ENCODE measurements at regions of chr4 and their contacts with region 1.

Region 1: DNA sequence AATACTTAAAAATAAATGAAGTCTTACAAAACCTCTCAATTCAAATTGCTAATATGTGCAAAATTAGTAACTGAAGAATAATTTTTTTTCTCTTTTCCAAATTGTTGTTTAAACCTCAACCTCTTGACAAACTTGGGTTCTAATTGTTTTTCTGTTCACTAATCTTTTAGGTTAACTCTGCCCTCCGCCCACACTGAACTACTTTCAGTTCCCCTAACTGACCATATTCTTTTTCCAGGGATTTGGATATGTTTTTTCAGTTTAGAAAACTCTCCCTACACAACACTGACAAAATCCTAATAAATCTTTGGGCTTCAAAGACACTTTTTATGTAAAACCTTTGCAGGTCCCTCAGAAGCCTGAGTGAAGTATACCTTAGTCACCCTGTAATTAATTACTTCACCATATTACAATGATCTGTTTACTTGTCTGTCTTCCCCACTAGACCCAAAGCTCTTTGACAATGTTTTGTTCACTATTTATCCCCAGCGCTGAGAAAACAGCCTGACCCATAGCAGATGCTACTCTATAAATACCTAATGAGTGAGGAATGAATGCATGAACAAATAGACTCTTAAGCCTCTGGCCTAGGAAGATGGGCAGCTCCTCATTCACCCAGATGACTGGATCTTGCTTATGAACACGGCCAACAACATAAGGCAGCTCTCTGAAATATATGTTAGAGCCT is 134.9 kb downstream of the MAML3 start:
- DNase-seq: peak in 2 of 3 donors; percentile 30 to 51
- H3K4me3 ChIP-seq: no peak overlapping the region
- H3K27ac ChIP-seq: peak overlapping the region in 1 of 2 experiments; percentile 44
- H3K4me1 ChIP-seq: peaks cover 0 to 29% (median 22%) of the 10 kb centered on the region in 4 experiments
- H3K27me3 ChIP-seq: no peaks in the 10 kb centered on the region

Region 2: DNA sequence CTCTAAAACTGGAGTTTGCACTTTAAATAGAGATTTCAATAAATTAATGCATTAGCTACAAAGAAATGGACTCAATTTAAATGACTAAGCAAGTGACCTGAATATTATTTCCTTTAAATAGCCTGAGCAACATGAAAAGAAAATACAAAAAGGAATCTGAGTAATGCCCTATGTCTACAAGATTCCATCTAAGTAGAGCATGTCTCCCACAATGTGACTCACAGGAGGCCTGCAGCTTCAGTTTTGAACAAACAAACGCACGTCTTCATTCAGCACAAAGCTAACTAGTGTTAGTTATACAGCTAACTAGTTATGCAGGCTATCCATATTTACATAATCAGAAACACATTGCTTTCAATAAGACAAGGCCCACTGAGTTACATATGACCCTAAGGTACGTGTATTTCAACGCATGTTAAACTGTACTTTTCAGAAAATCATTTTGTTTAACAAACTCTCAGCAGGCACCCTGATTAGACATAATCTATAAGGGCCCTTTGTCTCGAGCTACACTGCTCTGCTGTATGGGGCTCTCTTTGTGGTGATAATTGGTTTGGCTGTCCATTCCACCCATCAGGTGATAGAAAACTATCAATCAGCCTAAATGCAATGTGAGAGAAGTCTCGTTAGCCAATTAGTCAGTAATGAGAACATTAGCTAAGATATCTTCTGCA is 18.4 kb after region 1 on chr4:
- CTCF ChIA-PET with region 1: interaction called, 13 read pairs
- POLR2A ChIA-PET with region 1: interaction called, 3 read pairs
- DNase-seq: peak in 1 of 3 donors; percentile 52
- H3K4me3 ChIP-seq: no peak overlapping the region
- H3K27ac ChIP-seq: no peak overlapping the region
- H3K4me1 ChIP-seq: peaks cover 10 to 20% (median 16%) of the 10 kb centered on the region in 4 experiments
- H3K27me3 ChIP-seq: no peaks in the 10 kb centered on the region

Measured in common myeloid progenitor, CD34-positive (primary cell).